ENCODE measurements at regions of chr17 and their contacts with region 1.

Region 1: GRCh38 chr17:82037113-82037888 is at the start of gene DCXR:
- DNase-seq: peak; percentile 96
- H3K4me3 ChIP-seq: peak within 1 kb of the TSS; percentile 68 to 84 (median 73)
- H3K27ac ChIP-seq: peak within 1 kb of the TSS; percentile 31
- H3K4me1 ChIP-seq: peaks cover 16% of the 10 kb centered on the region
- H3K27me3 ChIP-seq: no peaks in the 10 kb centered on the region
- CTCF ChIP-seq: peak; percentile 50 to 80
- total RNA-seq, gene DCXR: 27.7 to 68.9 TPM

Region 2: DNA sequence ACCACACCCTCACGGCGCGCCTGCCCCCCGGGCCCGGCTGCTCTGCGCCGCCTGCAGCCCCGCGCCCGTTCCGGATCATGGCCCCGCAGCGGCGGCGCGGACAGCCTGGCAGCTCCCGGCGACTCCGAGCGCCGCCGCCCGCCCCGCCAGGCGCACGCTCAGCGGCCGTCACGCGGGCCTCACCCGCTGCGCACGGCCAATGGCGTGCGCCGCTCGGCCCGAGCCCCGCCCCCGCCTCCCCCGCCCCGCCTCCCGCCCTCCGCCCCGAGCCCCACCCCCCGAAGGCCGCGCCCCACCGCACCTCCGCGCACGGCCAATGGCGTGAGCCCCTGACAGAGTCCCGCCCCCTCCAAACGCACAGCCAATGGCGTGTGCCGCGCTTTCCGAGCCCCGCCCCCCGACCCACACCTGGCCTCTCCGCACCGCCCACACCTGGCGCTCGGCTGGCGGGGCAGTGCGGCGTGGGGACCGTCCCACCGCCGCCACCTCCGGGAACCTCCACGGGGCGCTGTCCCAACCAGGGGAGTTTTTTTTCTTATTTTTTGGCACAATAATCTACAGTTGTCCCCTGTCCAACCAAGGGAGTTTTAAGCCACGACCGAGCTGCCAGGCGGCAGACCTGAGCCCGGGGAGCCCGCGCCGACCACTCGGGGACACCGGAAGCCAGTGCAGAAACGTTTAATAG is 125.9 kb before region 1 on chr17 and contains the start of gene PCYT2:
- CTCF ChIA-PET with region 1: no interaction called
- dilution Hi-C with region 1: loop called (anchors 5 kb)
- in situ Hi-C with region 1: no loop called
- intact Hi-C with region 1: no loop called
- DNase-seq: peak; percentile 85
- H3K4me3 ChIP-seq: peak within 1 kb of the TSS; percentile 81 to 92 (median 83)
- H3K27ac ChIP-seq: peak within 1 kb of the TSS; percentile 19
- H3K4me1 ChIP-seq: peaks cover 12% of the 10 kb centered on the region
- H3K27me3 ChIP-seq: no peaks in the 10 kb centered on the region
- CTCF ChIP-seq: peak in 1 of 2 donors; percentile 2
- total RNA-seq, gene PCYT2: 23.5 to 48.7 TPM

Region 3: DNA sequence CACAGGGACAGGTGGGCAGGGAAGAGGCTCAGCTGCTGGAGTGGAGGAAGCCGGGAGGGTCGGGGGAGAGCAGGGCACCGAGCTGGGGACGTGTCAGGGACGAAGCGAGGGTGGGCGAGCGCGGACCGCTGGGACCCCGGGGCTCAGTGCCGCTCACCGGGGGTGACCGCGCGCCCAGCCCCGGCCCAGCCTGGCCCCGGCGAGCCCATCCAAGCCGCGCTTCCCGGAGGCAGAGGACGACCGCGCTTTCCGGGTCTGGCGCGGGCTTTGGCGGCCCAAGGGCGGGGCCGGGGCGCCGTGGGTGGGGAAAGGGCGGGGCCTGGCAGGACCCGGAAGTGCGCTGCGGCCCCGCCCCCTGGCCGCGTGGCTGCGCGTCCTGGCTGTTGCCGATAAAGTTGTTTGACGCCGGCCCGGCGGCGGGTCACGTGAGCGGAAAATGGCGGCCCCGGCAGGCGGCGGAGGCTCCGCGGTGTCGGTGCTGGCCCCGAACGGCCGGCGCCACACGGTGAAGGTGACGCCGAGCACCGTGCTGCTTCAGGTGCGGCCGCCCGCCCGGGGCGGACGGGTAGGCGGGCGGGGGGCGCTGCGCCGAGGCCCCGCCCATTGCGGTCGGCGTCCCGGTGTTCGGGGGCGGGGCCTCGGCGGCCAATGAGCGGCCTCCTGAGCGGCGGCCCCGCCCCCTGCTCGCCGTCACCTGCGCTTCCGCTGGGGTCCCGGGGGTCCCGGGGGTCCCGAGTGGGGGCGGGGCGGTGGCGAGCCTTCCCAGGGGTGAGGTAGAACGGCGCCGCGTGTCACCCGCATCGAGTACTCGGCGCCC is 59.9 kb before region 1 on chr17 and contains the start of gene ASPSCR1:
- CTCF ChIA-PET with region 1: no interaction called
- dilution Hi-C with region 1: loop called (anchors 10 kb)
- in situ Hi-C with region 1: no loop called
- intact Hi-C with region 1: no loop called
- DNase-seq: peak; percentile 84
- H3K4me3 ChIP-seq: peak within 1 kb of the TSS; percentile 66 to 98 (median 73)
- H3K27ac ChIP-seq: peak within 1 kb of the TSS; percentile 80
- H3K4me1 ChIP-seq: peaks cover 16% of the 10 kb centered on the region
- H3K27me3 ChIP-seq: no peaks in the 10 kb centered on the region
- CTCF ChIP-seq: no peak
- total RNA-seq, gene ASPSCR1: 13.3 to 21.3 TPM

Region 4: DNA sequence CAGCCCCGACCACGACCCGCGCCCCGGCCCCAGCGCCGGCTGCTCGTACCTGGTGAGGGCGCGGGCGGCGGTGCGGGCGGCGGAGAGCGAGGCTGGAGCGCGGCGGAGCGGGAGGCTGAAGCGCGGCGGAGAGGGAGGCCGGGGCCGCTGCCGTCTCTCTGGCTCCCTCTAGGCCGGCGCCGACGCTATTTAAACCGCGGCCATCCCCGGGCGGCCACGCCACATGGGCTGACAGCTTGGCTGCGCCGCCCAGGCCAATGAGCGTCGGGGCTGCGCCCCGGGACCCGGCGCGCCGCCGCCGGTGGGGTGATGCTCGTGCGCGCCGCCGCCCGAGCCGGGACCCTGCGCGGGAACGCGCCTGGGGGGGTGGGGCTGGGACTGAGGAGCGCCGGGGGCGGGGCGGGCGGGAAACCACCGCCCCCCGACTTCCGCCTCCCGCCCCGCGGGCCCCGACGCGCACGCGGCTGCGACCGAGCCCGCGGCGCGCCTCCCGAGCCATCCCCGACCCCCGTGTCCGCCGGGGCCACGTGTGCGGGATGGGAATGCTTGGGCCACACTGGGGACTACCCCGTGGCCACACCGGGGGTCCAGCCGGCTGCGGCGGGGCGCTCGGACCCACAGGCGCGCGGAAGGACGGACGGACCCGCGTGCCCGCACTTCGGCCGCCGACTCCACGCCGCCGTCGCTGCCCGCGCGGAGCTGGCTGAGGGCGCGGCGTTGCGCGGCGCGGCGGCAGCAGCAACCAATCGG is 60.9 kb after region 1 on chr17 and contains the start of gene FASN:
- CTCF ChIA-PET with region 1: interaction called, 4 read pairs
- dilution Hi-C with region 1: no loop called
- in situ Hi-C with region 1: no loop called
- intact Hi-C with region 1: loop called (anchors 2 kb)
- DNase-seq: peak; percentile 93
- H3K4me3 ChIP-seq: peak within 1 kb of the TSS; percentile 63 to 82 (median 68)
- H3K27ac ChIP-seq: peak within 1 kb of the TSS; percentile 76
- H3K4me1 ChIP-seq: peaks cover 38% of the 10 kb centered on the region
- H3K27me3 ChIP-seq: no peaks in the 10 kb centered on the region
- CTCF ChIP-seq: peak; percentile 26 to 57
- total RNA-seq, gene FASN: 126 to 452 TPM

Region 5: DNA sequence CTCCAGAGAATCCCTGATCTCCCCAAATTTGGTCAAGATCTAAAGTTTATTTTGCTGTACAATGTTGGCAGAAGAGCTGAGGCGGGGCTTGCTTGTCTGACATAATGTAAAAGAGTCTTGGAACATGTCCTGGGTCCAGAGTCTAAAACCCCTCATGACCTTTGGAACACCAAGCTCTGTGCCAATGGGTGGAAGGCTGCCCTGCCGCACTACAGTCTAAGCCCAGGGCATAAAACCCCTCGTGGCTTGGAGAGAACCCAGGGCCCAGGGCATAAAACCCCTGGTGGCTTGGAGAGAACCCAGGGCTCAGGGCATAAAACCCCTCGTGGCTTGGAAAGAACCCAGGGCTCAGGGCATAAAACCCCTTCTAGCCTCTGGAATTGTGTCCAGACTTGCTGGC is 138.7 kb after region 1 on chr17:
- CTCF ChIA-PET with region 1: no interaction called
- dilution Hi-C with region 1: loop called (anchors 5 kb)
- in situ Hi-C with region 1: loop called in 1 of 2 experiments (anchors 25 kb)
- intact Hi-C with region 1: no loop called
- DNase-seq: no peak
- H3K4me3 ChIP-seq: no peak overlapping the region
- H3K27ac ChIP-seq: no peak overlapping the region
- H3K4me1 ChIP-seq: no peaks in the 10 kb centered on the region
- H3K27me3 ChIP-seq: no peaks in the 10 kb centered on the region
- CTCF ChIP-seq: no peak

Region 6: GRCh38 chr17:82332669-82333278 is 295.5 kb after region 1 on chr17:
- CTCF ChIA-PET with region 1: no interaction called
- dilution Hi-C with region 1: loop called (anchors 10 kb)
- in situ Hi-C with region 1: no loop called
- intact Hi-C with region 1: no loop called
- DNase-seq: peak; percentile 46
- H3K4me3 ChIP-seq: peak overlapping the region in 2 of 3 experiments; percentile 18 to 46
- H3K27ac ChIP-seq: no peak overlapping the region
- H3K4me1 ChIP-seq: peaks cover 46% of the 10 kb centered on the region
- H3K27me3 ChIP-seq: no peaks in the 10 kb centered on the region
- CTCF ChIP-seq: no peak